ENCODE measurements at regions of chr20 and their contacts with region 1.

Region 1: DNA sequence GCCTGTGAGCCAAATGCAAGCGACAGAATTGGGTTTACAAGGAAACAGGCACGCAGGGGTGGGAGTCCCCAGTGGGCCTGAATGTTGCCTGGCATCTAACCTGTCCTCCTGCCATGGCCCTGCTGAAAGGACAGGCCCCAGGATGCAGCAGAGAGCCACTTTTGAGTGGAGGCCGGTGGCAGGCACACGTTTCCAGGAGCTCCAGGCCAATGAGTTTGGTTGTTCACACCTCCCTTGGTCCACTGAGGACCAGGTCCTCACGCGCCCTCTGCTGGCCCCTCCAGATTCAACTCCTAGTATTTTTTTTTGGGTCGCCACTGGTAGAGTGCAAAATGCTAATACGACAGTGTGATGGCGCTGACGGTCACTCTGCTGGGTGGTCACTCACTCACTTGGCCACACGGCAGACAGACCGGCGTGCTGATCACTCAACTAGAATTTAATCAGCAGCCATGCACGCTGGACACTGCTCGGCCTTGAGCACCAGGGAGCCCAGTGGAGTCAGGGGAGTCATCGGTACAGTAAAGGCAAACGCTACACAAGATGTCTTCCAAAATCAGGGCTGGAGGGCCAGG is 81.7 kb upstream of the NFATC2 start:
- DNase-seq: peak; percentile 18 to 66 (median 42)
- ATAC-seq: peak; percentile 71
- H3K4me3 ChIP-seq: no peak overlapping the region
- H3K4me3 Mint-ChIP-seq: no peak overlapping the region
- H3K27ac ChIP-seq: no peak overlapping the region
- H3K27ac Mint-ChIP-seq: no peak overlapping the region
- H3K4me1 ChIP-seq: no peaks in the 10 kb centered on the region
- H3K4me1 Mint-ChIP-seq: peaks cover 0 to 5% (median 0%) of the 10 kb centered on the region in 7 donors
- H3K27me3 ChIP-seq: no peaks in the 10 kb centered on the region
- H3K27me3 Mint-ChIP-seq: no peaks in the 10 kb centered on the region

Region 2: DNA sequence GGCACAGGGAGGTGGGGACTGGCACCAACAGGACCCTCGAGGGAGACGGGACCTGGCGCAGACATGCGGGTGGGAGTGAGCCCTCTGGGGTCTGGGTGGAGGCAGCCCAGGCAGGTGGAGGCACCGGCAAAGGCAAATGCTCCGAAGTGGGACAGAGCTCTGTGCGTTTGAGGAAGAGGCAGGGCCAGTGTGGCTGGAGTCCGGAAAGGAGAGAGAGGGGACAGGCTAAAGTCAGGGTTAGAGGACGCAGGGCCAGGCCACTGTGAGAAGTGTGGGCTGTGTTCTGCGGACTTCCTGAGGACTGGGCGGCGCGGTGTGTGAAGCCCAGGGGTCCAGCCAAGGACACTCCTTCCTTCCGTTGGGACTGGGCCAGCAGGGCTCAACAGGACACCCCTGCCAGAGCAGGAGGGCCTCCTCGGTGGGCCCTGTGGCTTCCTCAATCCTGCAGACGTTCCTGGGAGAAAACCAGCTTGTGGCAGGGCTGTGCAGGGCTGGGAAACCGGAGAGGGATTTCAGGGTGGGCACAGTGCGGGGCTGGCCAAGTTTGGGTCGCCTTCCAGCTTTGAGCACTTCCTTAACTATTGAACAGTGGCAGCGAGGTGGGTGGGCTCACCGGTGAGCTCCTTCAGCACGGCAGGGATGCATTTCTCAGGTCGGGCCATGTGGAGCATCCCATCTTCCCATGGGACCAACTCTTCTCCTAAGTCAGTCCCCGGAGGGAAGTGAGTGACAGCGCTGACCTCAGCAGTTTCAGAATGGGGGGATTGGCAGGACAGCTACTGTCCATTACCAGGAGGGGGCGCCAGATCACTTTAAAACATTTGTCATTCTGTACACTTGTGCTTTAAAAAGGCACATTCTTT is 643.2 kb before region 1 on chr20:
- CTCF ChIA-PET with region 1: no interaction called
- POLR2A ChIA-PET with region 1: no interaction called
- intact Hi-C with region 1: loop called in 1 of 2 experiments (anchors 5 kb)
- DNase-seq: peak; percentile 20 to 61 (median 47)
- ATAC-seq: peak; percentile 67
- H3K4me3 ChIP-seq: no peak overlapping the region
- H3K4me3 Mint-ChIP-seq: peak overlapping the region in 2 of 10 donors; percentile 34 to 47
- H3K27ac ChIP-seq: no peak overlapping the region
- H3K27ac Mint-ChIP-seq: no peak overlapping the region
- H3K4me1 ChIP-seq: peaks cover 0 to 5% of the 10 kb centered on the region in 2 donors
- H3K4me1 Mint-ChIP-seq: peaks cover 0 to 9% (median 4%) of the 10 kb centered on the region in 7 donors
- H3K27me3 ChIP-seq: peaks cover 0 to 3% of the 10 kb centered on the region in 2 donors
- H3K27me3 Mint-ChIP-seq: peaks cover 21 to 52% (median 35%) of the 10 kb centered on the region in 5 donors

Region 3: DNA sequence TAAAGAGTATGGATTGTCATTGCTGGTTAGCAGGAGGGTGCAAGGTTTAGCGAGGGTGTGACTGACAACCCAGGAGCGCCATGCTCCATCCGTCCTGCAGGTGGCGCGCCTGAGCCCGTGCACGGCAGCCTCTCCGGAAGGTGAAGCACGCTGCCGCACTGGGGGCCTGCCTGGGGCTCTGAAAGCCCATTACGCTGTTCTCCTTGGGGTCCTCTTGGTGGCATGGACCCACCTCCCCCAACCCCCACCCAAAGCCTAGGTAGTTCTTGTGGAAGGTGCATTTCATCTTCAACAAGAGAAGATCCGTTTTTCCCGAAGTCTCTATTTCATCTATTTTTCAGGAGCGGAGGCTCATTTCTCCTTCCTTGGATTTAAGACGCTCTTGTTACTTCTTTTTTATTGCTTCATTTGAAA is 403.9 kb before region 1 on chr20:
- CTCF ChIA-PET with region 1: no interaction called
- POLR2A ChIA-PET with region 1: no interaction called
- intact Hi-C with region 1: loop called in 1 of 2 experiments (anchors 10 kb)
- DNase-seq: peak in 7 of 9 donors; percentile 7 to 67 (median 33)
- ATAC-seq: peak; percentile 61
- H3K4me3 ChIP-seq: no peak overlapping the region
- H3K4me3 Mint-ChIP-seq: no peak overlapping the region
- H3K27ac ChIP-seq: no peak overlapping the region
- H3K27ac Mint-ChIP-seq: no peak overlapping the region
- H3K4me1 ChIP-seq: no peaks in the 10 kb centered on the region
- H3K4me1 Mint-ChIP-seq: peaks cover 6 to 23% (median 11%) of the 10 kb centered on the region in 7 donors
- H3K27me3 ChIP-seq: no peaks in the 10 kb centered on the region
- H3K27me3 Mint-ChIP-seq: peaks cover 36 to 73% (median 65%) of the 10 kb centered on the region in 5 donors

Region 4: DNA sequence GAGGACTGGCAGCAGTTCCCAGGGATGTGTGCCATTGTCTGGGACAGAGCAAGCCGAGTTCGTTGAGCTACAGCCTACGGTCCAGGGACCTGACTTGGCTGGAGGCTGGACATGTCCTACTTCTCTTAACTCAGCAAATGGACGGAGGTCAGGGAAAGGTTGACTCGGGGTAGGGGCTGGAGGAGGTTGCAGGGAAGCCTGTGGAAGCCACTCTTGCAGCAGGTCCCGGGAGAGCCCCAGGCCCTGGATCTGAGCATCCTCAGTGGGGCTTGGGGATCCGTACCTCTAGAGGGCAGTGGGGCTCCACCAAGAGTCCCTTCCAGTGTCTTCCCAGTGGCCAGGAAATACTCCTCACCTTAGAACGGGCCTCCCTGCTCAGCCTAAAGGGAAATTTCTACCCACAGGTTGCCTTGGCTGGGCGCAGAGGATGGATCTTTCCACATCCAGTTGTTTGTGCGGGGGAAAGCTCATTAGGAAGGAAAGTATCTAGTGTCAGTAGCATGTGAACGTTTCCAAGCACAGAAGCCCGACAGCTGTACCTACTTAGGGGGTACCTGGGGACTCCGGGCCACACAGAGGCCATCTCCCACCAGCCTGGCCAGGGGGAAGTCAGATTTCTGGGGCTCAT is 252.0 kb before region 1 on chr20:
- CTCF ChIA-PET with region 1: interaction called, 7 read pairs
- POLR2A ChIA-PET with region 1: no interaction called
- intact Hi-C with region 1: loop called in 1 of 2 experiments (anchors 1 kb)
- DNase-seq: peak; percentile 11 to 58 (median 41)
- ATAC-seq: peak; percentile 80
- H3K4me3 ChIP-seq: no peak overlapping the region
- H3K4me3 Mint-ChIP-seq: no peak overlapping the region
- H3K27ac ChIP-seq: no peak overlapping the region
- H3K27ac Mint-ChIP-seq: no peak overlapping the region
- H3K4me1 ChIP-seq: peaks cover 0 to 3% of the 10 kb centered on the region in 2 donors
- H3K4me1 Mint-ChIP-seq: peaks cover 0 to 14% (median 0%) of the 10 kb centered on the region in 7 donors
- H3K27me3 ChIP-seq: no peaks in the 10 kb centered on the region
- H3K27me3 Mint-ChIP-seq: peaks cover 0 to 2% (median 0%) of the 10 kb centered on the region in 5 donors

Region 5: GRCh38 chr20:51440589-51440988 is 183.7 kb before region 1 on chr20:
- CTCF ChIA-PET with region 1: no interaction called
- POLR2A ChIA-PET with region 1: no interaction called
- intact Hi-C with region 1: no loop called
- DNase-seq: no peak
- ATAC-seq: peak; percentile 12
- H3K4me3 ChIP-seq: no peak overlapping the region
- H3K4me3 Mint-ChIP-seq: no peak overlapping the region
- H3K27ac ChIP-seq: no peak overlapping the region
- H3K27ac Mint-ChIP-seq: peak overlapping the region in 4 of 9 donors; percentile 10 to 43 (median 22)
- H3K4me1 ChIP-seq: peaks cover 7 to 40% of the 10 kb centered on the region in 2 donors
- H3K4me1 Mint-ChIP-seq: peaks cover 0 to 41% (median 12%) of the 10 kb centered on the region in 7 donors
- H3K27me3 ChIP-seq: no peaks in the 10 kb centered on the region
- H3K27me3 Mint-ChIP-seq: no peaks in the 10 kb centered on the region

Region 6: DNA sequence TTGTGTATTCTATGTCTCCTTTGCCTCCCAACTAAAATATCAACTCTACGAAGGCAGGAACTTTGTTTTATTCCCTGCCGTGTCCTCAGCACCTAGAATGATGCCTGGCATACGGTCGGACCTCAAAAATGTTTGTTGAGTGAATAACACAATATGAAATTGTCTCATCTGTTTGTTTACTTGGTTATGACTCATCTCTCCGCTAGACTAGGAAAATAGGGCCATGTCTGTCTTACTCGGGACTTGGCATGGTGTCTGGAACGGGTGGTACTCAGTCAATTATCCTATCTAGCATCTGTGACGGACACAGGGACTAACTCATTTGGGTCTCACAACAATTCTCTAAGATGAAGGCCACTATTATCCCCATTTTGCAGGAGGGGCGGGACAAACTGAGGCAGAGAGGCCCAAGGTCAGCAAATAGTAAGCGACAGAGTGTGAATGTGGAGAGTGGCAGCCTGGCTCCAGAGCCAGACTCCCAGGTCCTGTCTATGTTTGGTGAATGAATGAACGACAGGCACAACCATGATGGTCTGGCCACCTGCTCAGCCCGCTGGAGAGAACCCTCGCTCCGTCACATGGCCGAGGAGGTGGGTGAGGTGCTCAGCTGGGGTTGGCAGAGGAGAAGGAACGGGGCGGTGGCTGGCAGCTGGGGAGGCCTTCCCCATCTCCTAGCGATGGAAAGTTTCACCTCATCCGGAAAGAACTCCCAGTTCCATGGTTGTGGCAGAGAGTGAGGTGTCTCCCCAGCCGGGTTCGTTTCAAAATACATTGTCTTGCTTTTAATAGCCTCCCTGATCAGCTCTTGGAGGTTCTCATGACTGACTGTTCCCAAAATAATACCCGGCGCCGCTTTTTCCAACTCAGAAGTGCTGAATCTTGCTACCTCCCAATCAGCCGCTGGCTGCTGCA is 54.2 kb before region 1 on chr20:
- CTCF ChIA-PET with region 1: no interaction called
- POLR2A ChIA-PET with region 1: no interaction called
- intact Hi-C with region 1: no loop called
- DNase-seq: no peak
- ATAC-seq: no peak
- H3K4me3 ChIP-seq: no peak overlapping the region
- H3K4me3 Mint-ChIP-seq: no peak overlapping the region
- H3K27ac ChIP-seq: no peak overlapping the region
- H3K27ac Mint-ChIP-seq: no peak overlapping the region
- H3K4me1 ChIP-seq: no peaks in the 10 kb centered on the region
- H3K4me1 Mint-ChIP-seq: no peaks in the 10 kb centered on the region
- H3K27me3 ChIP-seq: no peaks in the 10 kb centered on the region
- H3K27me3 Mint-ChIP-seq: peaks cover 0 to 37% (median 0%) of the 10 kb centered on the region in 5 donors

Region 7: DNA sequence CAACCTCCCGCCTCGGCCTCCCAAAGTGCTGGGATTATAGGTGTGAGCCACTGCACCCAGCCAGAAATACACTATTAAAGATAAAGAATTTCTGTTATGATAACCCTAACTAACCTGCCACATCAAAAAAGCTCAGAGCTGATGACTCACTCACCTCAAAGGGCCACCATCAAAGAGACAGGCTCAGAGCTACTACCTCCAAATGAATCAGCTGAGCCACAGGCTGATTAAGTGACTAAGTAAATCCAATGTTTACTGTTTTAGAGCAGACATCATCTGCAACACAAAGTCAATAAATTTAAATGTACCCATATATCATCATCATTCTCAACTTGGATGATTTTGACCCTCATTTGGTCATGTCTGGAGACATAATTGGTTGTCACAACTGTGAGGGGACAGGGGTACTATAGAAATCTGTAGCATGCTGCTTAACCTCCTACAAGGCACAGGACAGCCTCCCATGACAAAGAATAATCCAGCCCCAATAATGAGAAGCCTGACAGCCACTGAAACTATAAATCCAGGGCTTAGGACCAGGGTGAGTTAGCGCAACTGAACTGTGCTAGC is 37.5 kb after region 1 on chr20:
- CTCF ChIA-PET with region 1: no interaction called
- POLR2A ChIA-PET with region 1: no interaction called
- intact Hi-C with region 1: no loop called
- DNase-seq: peak in 1 of 9 donors; percentile 40
- ATAC-seq: peak; percentile 64
- H3K4me3 ChIP-seq: no peak overlapping the region
- H3K4me3 Mint-ChIP-seq: no peak overlapping the region
- H3K27ac ChIP-seq: no peak overlapping the region
- H3K27ac Mint-ChIP-seq: peak overlapping the region in 1 of 9 donors; percentile 19
- H3K4me1 ChIP-seq: peaks cover 0 to 20% of the 10 kb centered on the region in 2 donors
- H3K4me1 Mint-ChIP-seq: peaks cover 1 to 13% (median 4%) of the 10 kb centered on the region in 7 donors
- H3K27me3 ChIP-seq: no peaks in the 10 kb centered on the region
- H3K27me3 Mint-ChIP-seq: peaks cover 0 to 4% (median 0%) of the 10 kb centered on the region in 5 donors

Region 8: DNA sequence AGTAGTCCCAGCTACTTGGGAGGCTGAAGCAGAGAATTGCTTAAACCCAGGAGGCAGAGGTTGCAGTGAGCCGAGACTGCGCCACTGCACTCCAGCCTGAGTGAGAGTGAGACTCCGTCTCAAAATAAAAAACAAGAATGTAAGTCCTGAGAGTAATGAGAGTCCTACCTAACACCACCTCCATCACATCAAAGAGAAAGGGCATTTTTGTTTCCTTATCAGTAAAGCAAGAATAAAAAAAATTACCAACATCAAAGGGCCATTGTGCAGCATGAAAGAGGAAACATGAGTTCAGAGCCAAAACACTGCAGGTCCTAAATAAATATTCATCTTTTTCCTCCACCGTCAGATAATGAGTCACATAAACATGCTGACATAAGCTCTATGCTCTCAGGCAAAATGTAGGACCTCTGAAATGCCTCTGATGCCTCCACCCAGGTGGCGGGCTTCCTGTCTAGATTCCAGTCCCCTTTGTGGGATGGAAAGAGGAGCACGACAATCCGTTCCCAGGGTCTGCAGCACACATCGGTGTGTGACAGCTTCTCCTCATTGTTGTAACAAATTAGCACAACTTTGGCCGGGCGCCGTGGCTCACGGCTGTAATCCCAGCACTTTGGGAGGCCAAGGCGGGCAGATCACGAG is 136.8 kb after region 1 on chr20:
- CTCF ChIA-PET with region 1: no interaction called
- POLR2A ChIA-PET with region 1: no interaction called
- intact Hi-C with region 1: no loop called
- DNase-seq: no peak
- ATAC-seq: no peak
- H3K4me3 ChIP-seq: no peak overlapping the region
- H3K4me3 Mint-ChIP-seq: no peak overlapping the region
- H3K27ac ChIP-seq: no peak overlapping the region
- H3K27ac Mint-ChIP-seq: no peak overlapping the region
- H3K4me1 ChIP-seq: no peaks in the 10 kb centered on the region
- H3K4me1 Mint-ChIP-seq: no peaks in the 10 kb centered on the region
- H3K27me3 ChIP-seq: no peaks in the 10 kb centered on the region
- H3K27me3 Mint-ChIP-seq: peaks cover 1 to 33% (median 9%) of the 10 kb centered on the region in 5 donors

Measured in naive thymus-derived CD4-positive, alpha-beta T cell (primary cell).